ENCODE measurements at regions of chr15 and their contacts with region 1.

Region 1: GRCh38 chr15:48861813-48862431 is 16.0 kb upstream of the EID1 start:
- DNase-seq: peak; percentile 25
- H3K4me3 Mint-ChIP-seq: no peak overlapping the region
- H3K27ac Mint-ChIP-seq: no peak overlapping the region
- H3K4me1 Mint-ChIP-seq: peaks cover 27% of the 10 kb centered on the region
- H3K27me3 Mint-ChIP-seq: peaks cover 6% of the 10 kb centered on the region

Region 2: DNA sequence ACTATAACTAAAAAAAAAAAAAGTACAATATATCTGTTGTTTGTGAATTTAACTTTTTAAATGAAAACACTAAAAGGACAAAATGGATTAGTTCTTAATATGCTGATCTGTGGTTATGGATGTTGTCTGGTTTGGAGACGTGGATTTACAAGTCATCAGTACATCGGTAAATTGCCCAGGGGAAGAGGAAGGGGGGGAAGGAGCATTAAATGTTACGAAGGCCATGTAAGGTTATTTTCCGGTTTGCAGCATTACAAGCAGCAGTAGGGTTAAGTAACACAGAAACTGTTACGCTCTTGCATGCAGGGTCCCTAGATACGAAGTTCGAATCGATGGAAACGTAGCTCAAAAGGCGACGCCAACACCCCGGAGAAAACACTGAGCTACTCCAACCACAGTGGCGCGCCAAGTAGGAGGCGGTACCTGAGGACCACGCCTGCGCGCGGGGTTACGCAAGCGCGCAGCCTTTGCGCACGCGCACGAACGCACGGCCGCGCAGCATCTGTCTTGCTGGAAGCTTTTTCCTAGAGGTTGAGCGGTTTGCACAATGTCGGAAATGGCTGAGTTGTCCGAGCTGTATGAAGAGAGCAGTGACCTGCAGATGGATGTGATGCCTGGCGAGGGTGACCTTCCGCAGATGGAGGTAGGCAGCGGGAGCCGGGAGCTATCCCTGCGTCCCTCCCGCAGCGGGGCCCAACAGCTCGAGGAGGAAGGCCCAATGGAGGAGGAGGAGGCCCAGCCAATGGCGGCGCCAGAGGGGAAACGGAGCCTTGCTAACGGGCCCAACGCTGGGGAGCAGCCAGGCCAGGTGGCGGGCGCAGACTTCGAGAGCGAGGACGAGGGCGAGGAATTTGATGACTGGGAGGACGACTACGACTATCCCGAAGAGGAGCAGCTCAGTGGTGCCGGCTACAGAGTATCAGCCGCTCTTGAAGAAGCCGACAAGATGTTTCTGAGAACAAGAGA is 16.0 kb after region 1 on chr15 and contains the start of gene EID1:
- intact Hi-C with region 1: loop called (anchors 1 kb)
- DNase-seq: peak; percentile 94
- H3K4me3 Mint-ChIP-seq: peak within 1 kb of the TSS; percentile 99
- H3K27ac Mint-ChIP-seq: peak within 1 kb of the TSS; percentile 97
- H3K4me1 Mint-ChIP-seq: peaks cover 69% of the 10 kb centered on the region
- H3K27me3 Mint-ChIP-seq: no peaks in the 10 kb centered on the region
- total RNA-seq, gene EID1: 177 and 183 TPM in 2 replicates

Region 3: GRCh38 chr15:48975472-48976419 is 113.8 kb after region 1 on chr15:
- intact Hi-C with region 1: loop called (anchors 1 kb)
- DNase-seq: peak; percentile 77
- H3K4me3 Mint-ChIP-seq: peak overlapping the region; percentile 60
- H3K27ac Mint-ChIP-seq: peak overlapping the region; percentile 19
- H3K4me1 Mint-ChIP-seq: peaks cover 11% of the 10 kb centered on the region
- H3K27me3 Mint-ChIP-seq: no peaks in the 10 kb centered on the region

Region 4: GRCh38 chr15:49145651-49146609 is 284.0 kb after region 1 on chr15:
- intact Hi-C with region 1: loop called (anchors 1 kb)
- DNase-seq: peak; percentile 10
- H3K4me3 Mint-ChIP-seq: no peak overlapping the region
- H3K27ac Mint-ChIP-seq: no peak overlapping the region
- H3K4me1 Mint-ChIP-seq: peaks cover 31% of the 10 kb centered on the region
- H3K27me3 Mint-ChIP-seq: no peaks in the 10 kb centered on the region

Region 5: GRCh38 chr15:49421991-49422390 is 560.1 kb after region 1 on chr15:
- intact Hi-C with region 1: loop called (anchors 2 kb)
- DNase-seq: no peak
- H3K4me3 Mint-ChIP-seq: no peak overlapping the region
- H3K27ac Mint-ChIP-seq: peak overlapping the region; percentile 57
- H3K4me1 Mint-ChIP-seq: peaks cover 4% of the 10 kb centered on the region
- H3K27me3 Mint-ChIP-seq: peaks cover 6% of the 10 kb centered on the region